ENCODE measurements at regions of chr4 and their contacts with region 1.

Region 1: DNA sequence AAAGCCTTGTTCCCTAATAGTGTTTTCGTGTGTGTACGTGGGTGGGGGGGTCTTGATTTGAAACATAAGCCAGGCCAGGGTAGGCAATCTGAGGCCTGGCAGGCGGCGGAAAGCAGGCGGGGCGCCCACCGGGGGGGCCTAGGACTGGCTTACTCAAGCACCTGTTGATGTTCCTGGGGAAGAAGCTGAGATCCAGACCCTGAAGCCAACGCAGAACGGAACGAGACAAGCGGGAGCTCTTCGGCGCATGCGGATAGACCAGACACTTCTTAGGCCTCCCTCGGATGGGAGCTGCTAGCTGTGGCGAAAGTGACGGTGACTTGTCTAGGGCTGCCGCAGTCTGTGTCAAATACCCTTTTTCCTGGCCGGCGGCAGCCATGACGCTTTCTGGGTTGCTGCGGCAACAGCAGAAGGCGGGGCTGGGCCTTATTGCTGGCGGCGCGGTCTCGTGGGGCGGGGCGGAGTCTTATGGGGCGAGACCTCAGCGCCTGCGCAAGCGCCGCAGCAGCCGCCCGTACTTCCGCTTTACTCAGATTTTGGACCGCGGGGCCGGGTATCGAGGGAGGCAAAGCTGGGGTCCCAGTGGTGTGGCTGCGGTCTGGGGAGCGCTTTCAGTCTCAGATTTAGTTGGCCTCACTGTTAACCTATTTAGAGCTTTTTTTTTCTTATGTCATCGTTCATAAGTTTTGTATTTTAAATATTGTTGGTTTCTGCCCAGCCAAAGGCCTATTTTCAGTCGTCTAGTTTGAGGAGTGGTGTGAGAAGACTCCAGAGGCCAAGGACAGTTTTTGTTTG is at the start of gene SPATA4:
- DNase-seq: peak; percentile 96
- H3K4me3 Mint-ChIP-seq: peak within 1 kb of the TSS; percentile 76
- H3K27ac Mint-ChIP-seq: peak within 1 kb of the TSS; percentile 75
- H3K4me1 Mint-ChIP-seq: peaks cover 32% of the 10 kb centered on the region
- H3K27me3 Mint-ChIP-seq: peaks cover 12% of the 10 kb centered on the region
- total RNA-seq, gene SPATA4: not detected

Region 2: DNA sequence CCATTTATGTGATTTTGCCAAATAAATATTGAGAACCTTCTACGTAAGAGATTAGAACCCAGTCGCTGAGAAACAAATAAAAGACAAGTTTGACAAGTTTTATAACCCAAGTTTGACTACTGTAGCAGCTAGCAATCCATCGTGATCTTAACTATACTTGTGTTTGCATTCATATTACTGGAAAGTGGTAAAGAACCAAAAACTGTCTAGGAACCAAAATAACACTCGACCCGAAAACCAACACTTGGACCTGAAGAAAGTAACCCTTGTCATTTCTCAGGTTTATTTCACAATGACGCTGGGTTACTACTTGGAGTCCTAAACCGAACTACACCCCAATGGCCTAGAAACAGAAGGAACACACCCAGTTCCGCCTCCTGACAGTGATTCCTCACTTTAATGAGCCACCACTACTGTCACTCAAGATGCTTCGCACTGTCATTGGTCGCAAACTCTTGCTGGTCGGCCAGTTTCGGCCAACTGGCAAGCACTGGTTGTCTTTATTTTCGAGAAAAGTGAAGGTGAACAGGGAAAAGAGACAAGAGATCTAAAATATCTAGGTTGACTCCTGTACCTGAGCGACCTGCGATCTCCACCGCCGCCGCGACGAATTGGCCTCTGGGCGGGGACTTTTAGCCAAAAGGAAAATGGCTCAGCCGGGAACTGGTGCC is 1912.4 kb before region 1 on chr4:
- CTCF ChIA-PET with region 1: no interaction called
- intact Hi-C with region 1: loop called (anchors 2 kb)
- DNase-seq: peak; percentile 87
- H3K4me3 Mint-ChIP-seq: peak overlapping the region; percentile 98
- H3K27ac Mint-ChIP-seq: peak overlapping the region; percentile 99
- H3K4me1 Mint-ChIP-seq: peaks cover 55% of the 10 kb centered on the region
- H3K27me3 Mint-ChIP-seq: no peaks in the 10 kb centered on the region

Region 3: GRCh38 chr4:176123710-176124407 is 71.5 kb before region 1 on chr4:
- CTCF ChIA-PET with region 1: no interaction called
- intact Hi-C with region 1: loop called (anchors 1 kb)
- DNase-seq: no peak
- H3K4me3 Mint-ChIP-seq: no peak overlapping the region
- H3K27ac Mint-ChIP-seq: no peak overlapping the region
- H3K4me1 Mint-ChIP-seq: peaks cover 5% of the 10 kb centered on the region
- H3K27me3 Mint-ChIP-seq: peaks cover 5% of the 10 kb centered on the region

Region 4: DNA sequence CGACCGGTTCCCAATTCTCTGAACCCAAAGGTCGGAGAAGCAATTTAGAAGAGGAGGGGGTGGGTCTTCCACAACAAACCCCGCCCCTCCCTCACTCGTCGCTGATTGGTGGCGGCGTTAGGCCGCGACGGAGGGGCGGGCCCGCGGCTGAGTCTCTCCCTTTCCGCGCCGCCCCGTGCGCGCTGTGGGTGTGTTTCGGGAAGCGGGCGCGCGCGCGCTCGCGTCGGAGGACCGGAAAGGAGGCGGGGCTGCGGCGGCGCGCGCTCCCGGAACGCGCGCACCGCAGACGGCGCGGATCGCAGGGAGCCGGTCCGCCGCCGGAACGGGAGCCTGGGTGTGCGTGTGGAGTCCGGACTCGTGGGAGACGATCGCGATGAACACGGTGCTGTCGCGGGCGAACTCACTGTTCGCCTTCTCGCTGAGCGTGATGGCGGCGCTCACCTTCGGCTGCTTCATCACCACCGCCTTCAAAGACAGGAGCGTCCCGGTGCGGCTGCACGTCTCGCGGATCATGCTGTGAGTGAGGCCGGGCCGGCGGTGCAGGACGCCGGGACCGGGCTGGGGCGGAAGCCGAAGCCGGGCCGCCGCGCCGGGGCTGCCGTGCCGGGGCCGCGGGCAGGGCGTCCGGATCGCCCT is 124.4 kb after region 1 on chr4 and contains the start of gene SPCS3:
- CTCF ChIA-PET with region 1: no interaction called
- intact Hi-C with region 1: loop called (anchors 1 kb)
- DNase-seq: peak; percentile 94
- H3K4me3 Mint-ChIP-seq: peak within 1 kb of the TSS; percentile 84
- H3K27ac Mint-ChIP-seq: peak within 1 kb of the TSS; percentile 92
- H3K4me1 Mint-ChIP-seq: peaks cover 34% of the 10 kb centered on the region
- H3K27me3 Mint-ChIP-seq: no peaks in the 10 kb centered on the region
- total RNA-seq, gene SPCS3: 140 to 154 TPM

Region 5: DNA sequence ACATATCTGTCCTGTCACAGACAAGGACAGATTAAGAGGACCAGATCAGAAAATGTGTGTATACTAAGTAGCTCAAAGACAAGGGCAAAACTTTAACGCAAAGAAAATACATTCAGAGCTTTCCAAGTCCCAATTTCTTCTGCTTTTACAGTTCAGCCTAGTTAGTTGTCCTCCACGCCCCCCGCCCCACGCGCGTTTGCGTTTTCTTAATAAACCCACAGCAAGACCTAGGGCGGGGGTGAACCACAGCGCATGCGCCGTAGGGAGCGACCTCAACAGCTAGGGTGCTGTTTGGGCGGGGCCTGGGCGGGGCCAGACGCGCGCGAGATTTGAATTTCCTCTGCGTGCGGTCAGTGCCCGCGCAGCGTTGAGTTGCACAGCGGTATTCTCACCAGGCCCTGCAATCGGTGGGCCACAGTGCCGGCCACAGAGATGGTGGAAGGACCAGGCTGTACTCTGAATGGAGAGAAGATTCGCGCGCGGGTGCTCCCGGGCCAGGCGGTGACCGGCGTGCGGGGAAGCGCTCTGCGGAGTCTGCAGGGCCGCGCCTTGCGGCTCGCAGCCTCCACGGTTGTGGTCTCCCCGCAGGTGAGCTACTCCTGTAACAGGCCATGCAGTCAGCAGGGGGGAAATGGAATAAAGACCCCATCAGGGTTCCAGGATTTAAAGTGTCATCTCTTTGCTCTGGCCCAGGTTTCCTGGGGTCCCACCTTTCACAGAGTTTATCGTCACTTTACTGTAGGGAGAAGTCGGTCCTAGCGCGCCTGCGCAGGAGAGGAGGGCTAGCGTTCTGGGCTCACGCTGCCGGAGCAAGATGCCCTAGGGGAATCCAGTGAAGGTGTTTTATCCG is 1114.4 kb after region 1 on chr4 and contains the start of gene NEIL3:
- CTCF ChIA-PET with region 1: no interaction called
- intact Hi-C with region 1: loop called (anchors 2 kb)
- DNase-seq: peak; percentile 98
- H3K4me3 Mint-ChIP-seq: peak within 1 kb of the TSS; percentile 91
- H3K27ac Mint-ChIP-seq: peak within 1 kb of the TSS; percentile 88
- H3K4me1 Mint-ChIP-seq: peaks cover 21% of the 10 kb centered on the region
- H3K27me3 Mint-ChIP-seq: no peaks in the 10 kb centered on the region
- total RNA-seq, gene NEIL3: 21.9 to 22.7 TPM

Region 6: GRCh38 chr4:177401658-177402273 is 1206.4 kb after region 1 on chr4:
- CTCF ChIA-PET with region 1: no interaction called
- intact Hi-C with region 1: loop called (anchors 1 kb)
- DNase-seq: no peak
- H3K4me3 Mint-ChIP-seq: no peak overlapping the region
- H3K27ac Mint-ChIP-seq: no peak overlapping the region
- H3K4me1 Mint-ChIP-seq: peaks cover 48% of the 10 kb centered on the region
- H3K27me3 Mint-ChIP-seq: peaks cover 3% of the 10 kb centered on the region